ENCODE measurements at regions of chr6 and their contacts with region 1.

Region 1: GRCh38 chr6:166275714-166276166 is 32.5 kb downstream of the PRR18 start:
- DNase-seq: no peak
- ATAC-seq: peak; percentile 93
- H3K4me3 ChIP-seq: no peak overlapping the region
- H3K27ac ChIP-seq: no peak overlapping the region
- H3K4me1 ChIP-seq: peaks cover 28% of the 10 kb centered on the region
- H3K27me3 ChIP-seq: no peaks in the 10 kb centered on the region; a peak in 1 of 4 replicates
- CTCF ChIP-seq: peak; percentile 99 to 100 (median 100); a peak in 5 of 6 replicates
- EP300 ChIP-seq: no peak
- POLR2A ChIP-seq: no peak
- RAD21 ChIP-seq: peak; percentile 99

Region 2: GRCh38 chr6:166206510-166207283 is 69.0 kb before region 1 on chr6:
- CTCF ChIA-PET with region 1: no interaction called
- POLR2A ChIA-PET with region 1: no interaction called
- RAD21 ChIA-PET with region 1: no interaction called
- SMC1A ChIA-PET with region 1: no interaction called
- in situ Hi-C with region 1: no loop called
- intact Hi-C with region 1: no loop called
- DNase-seq: peak; percentile 62
- ATAC-seq: no peak
- H3K4me3 ChIP-seq: no peak overlapping the region
- H3K27ac ChIP-seq: no peak overlapping the region
- H3K4me1 ChIP-seq: peaks cover 21% of the 10 kb centered on the region
- H3K27me3 ChIP-seq: no peaks in the 10 kb centered on the region
- CTCF ChIP-seq: no peak
- EP300 ChIP-seq: no peak
- POLR2A ChIP-seq: no peak
- RAD21 ChIP-seq: no peak

Region 3: GRCh38 chr6:166286839-166287271 is 11.1 kb after region 1 on chr6:
- CTCF ChIA-PET with region 1: interaction called, 5 read pairs
- POLR2A ChIA-PET with region 1: interaction called, 8 read pairs
- RAD21 ChIA-PET with region 1: interaction called, 3 read pairs
- SMC1A ChIA-PET with region 1: interaction called, 11 read pairs
- in situ Hi-C with region 1: no loop called
- intact Hi-C with region 1: no loop called
- DNase-seq: peak; percentile 83
- ATAC-seq: peak; percentile 97
- H3K4me3 ChIP-seq: no peak overlapping the region
- H3K27ac ChIP-seq: peak overlapping the region; percentile 67
- H3K4me1 ChIP-seq: peaks cover 9% of the 10 kb centered on the region
- H3K27me3 ChIP-seq: no peaks in the 10 kb centered on the region
- CTCF ChIP-seq: no peak
- EP300 ChIP-seq: no peak
- POLR2A ChIP-seq: peak; percentile 56
- RAD21 ChIP-seq: no peak

Region 4: DNA sequence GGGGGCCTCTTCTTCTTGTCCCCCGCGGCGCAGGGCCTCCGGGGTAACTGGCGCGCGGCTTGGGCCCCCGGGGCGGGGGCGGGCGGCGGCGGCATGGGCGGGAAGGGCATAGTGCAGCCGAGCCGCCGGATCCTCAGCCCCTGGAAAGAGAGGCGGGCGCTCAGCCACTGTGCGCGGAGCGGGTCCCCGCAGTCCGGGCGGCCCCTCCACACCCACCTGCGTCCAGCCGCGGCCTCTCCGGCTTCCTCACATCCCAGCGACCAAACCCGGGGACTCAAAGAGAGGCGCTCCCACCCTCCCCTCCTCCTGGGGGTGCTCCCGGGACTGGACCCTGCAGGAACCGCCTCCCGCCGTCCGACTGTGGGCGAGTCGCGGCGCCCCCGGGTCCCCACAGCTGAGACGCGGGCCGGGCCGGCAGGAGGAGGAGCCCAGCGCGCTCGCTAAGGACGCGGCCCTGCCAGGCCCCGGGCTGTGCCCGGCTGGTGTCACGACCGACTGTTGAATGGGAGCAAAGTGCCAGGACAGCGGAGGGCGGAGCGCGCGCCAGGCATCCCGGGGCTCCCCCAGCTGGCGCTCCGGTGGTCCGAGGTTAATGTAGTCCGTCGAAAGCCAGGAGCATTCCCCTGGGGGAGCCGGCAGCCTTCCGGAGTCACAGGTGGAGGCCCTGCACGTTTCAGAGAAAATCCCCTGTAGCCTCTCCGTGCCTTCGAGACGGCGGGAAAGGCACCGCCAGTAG is 32.5 kb after region 1 on chr6 and contains the start of gene PRR18:
- CTCF ChIA-PET with region 1: interaction called, 58 read pairs
- POLR2A ChIA-PET with region 1: interaction called, 8 read pairs
- RAD21 ChIA-PET with region 1: interaction called, 60 read pairs
- SMC1A ChIA-PET with region 1: interaction called, 29 read pairs
- in situ Hi-C with region 1: loop called (anchors 5 kb)
- intact Hi-C with region 1: loop called (anchors 1 kb)
- DNase-seq: peak; percentile 42
- ATAC-seq: peak; percentile 77
- H3K4me3 ChIP-seq: peak within 1 kb of the TSS; percentile 67
- H3K27ac ChIP-seq: peak within 1 kb of the TSS; percentile 48; the same call in 1 of the 2 replicates
- H3K4me1 ChIP-seq: no peaks in the 10 kb centered on the region
- H3K27me3 ChIP-seq: no peaks in the 10 kb centered on the region; a peak in 2 of 4 replicates
- CTCF ChIP-seq: no peak
- EP300 ChIP-seq: no peak
- POLR2A ChIP-seq: peak; percentile 52; the same call in 1 of the 2 replicates
- RAD21 ChIP-seq: no peak
- polyA plus RNA-seq, gene PRR18: 0.26 to 0.84 TPM

Region 5: DNA sequence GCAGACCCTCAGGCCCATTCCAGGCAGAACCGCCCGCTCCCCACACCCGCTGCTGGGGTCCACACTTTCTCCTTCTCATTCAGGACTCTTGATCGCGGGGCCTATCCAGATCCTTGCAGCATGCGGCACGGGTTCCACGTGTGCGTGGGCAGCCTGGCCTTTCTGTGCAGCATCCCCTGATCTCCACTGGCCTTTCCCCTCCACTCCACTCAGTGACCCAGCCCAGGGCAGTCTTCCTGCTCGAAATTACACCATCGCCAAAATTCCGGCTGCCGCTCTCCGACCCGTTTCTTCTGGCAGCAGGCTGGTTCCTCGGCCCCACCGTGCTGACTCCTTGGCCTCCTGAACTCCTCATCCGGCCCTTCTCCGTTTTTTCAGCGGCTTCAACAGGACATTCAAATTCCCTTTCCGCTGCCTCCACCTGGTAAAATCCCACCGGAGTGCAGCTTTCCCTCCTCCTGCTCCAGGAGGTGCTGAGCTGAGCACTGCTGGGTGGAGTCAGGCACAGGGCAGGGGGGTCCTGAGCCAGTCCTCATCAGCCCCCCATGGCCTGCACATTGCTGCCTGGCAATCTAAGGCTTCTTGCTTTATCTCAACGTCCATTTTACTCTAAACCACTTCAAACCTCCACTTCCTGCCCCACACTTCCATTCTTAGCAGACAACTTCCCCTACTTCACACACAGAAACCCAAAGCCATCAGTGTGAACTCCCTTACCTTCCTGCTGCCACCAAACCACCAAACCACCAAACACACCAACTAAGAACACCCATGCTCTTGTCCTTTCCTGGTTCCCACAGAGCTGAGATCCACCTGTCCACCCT is 57.6 kb after region 1 on chr6:
- CTCF ChIA-PET with region 1: interaction called, 6 read pairs
- POLR2A ChIA-PET with region 1: interaction called, 5 read pairs
- RAD21 ChIA-PET with region 1: interaction called, 4 read pairs
- SMC1A ChIA-PET with region 1: interaction called, 3 read pairs
- in situ Hi-C with region 1: no loop called
- intact Hi-C with region 1: loop called (anchors 2 kb)
- DNase-seq: peak; percentile 73
- ATAC-seq: peak; percentile 64
- H3K4me3 ChIP-seq: peak overlapping the region; percentile 34; the same call in 1 of the 2 replicates
- H3K27ac ChIP-seq: peak overlapping the region; percentile 93
- H3K4me1 ChIP-seq: peaks cover 43% of the 10 kb centered on the region
- H3K27me3 ChIP-seq: no peaks in the 10 kb centered on the region
- CTCF ChIP-seq: no peak
- EP300 ChIP-seq: peak; percentile 31 to 51; a peak in 2 of 4 replicates
- POLR2A ChIP-seq: peak; percentile 40; the same call in 1 of the 2 replicates
- RAD21 ChIP-seq: no peak

Region 6: GRCh38 chr6:166488076-166488685 is 212.4 kb after region 1 on chr6:
- CTCF ChIA-PET with region 1: no interaction called
- POLR2A ChIA-PET with region 1: no interaction called
- RAD21 ChIA-PET with region 1: no interaction called
- SMC1A ChIA-PET with region 1: no interaction called
- in situ Hi-C with region 1: no loop called
- intact Hi-C with region 1: no loop called
- DNase-seq: peak; percentile 80
- ATAC-seq: peak; percentile 86
- H3K4me3 ChIP-seq: peak overlapping the region; percentile 42; the same call in 1 of the 2 replicates
- H3K27ac ChIP-seq: peak overlapping the region; percentile 59
- H3K4me1 ChIP-seq: peaks cover 9% of the 10 kb centered on the region
- H3K27me3 ChIP-seq: no peaks in the 10 kb centered on the region
- CTCF ChIP-seq: no peak
- EP300 ChIP-seq: no peak
- POLR2A ChIP-seq: peak; percentile 58
- RAD21 ChIP-seq: no peak